Activated naive CD4-positive, alpha-beta T cell treated with anti-CD3 and anti-CD28 coated beads for 36 hours (primary cell): ENCODE measurements at regions of chr17 and their contacts with region 1.

Region 1: GRCh38 chr17:55421179-55421934 is at the start of gene MMD:
- DNase-seq: no peak
- H3K4me3 Mint-ChIP-seq: peak within 1 kb of the TSS; percentile 89
- H3K27ac Mint-ChIP-seq: peak within 1 kb of the TSS; percentile 89
- H3K4me1 Mint-ChIP-seq: peaks cover 40% of the 10 kb centered on the region
- H3K27me3 Mint-ChIP-seq: peaks cover 24% of the 10 kb centered on the region
- total RNA-seq, gene MMD: 26.2 to 27.7 TPM

Region 2: DNA sequence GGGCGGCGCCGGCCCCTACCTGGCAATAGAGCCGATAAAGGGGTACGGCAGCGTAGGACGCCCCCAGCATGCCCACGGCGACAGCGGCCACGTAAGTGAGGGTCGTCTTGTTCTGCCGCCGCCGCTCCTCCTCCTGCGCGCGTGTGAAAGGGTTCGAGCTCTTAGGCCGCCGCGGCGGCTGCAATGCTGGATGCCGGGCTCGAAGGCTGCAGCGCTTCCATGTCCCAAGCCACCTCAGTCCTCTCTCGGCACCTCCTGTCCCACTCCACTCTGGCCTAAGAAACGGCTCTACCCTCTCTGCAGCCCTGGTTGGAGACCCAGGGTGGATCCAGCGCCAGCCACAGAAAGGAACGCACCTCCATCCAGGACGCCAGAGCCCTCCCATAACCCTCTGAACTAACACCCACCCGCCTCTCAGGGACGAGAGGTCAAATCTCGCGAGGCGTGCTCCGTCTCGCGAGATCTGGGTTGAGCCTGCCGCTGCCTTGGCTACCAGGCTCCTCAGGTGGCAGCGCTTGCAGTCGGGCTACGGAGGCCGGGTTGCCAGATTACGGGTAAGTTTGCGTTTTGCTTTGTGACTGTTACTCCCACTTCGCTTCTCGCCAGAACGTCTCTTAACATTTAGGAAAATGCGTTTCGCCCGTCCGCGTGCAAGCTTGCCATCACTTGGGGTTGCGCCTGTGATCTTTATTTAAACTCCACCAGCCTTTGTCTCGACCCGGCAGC is 452.9 kb before region 1 on chr17 and contains the starts of genes COX11 and STXBP4:
- CTCF ChIA-PET with region 1: no interaction called
- intact Hi-C with region 1: loop called (anchors 1 kb)
- DNase-seq: peak; percentile 96
- H3K4me3 Mint-ChIP-seq: no peak within 1 kb of the TSS
- H3K27ac Mint-ChIP-seq: no peak within 1 kb of the TSS
- H3K4me1 Mint-ChIP-seq: peaks cover 20% of the 10 kb centered on the region
- H3K27me3 Mint-ChIP-seq: no peaks in the 10 kb centered on the region
- total RNA-seq, gene COX11: 48.6 to 50.0 TPM
- total RNA-seq, gene STXBP4: 4.5 to 5.3 TPM

Region 3: DNA sequence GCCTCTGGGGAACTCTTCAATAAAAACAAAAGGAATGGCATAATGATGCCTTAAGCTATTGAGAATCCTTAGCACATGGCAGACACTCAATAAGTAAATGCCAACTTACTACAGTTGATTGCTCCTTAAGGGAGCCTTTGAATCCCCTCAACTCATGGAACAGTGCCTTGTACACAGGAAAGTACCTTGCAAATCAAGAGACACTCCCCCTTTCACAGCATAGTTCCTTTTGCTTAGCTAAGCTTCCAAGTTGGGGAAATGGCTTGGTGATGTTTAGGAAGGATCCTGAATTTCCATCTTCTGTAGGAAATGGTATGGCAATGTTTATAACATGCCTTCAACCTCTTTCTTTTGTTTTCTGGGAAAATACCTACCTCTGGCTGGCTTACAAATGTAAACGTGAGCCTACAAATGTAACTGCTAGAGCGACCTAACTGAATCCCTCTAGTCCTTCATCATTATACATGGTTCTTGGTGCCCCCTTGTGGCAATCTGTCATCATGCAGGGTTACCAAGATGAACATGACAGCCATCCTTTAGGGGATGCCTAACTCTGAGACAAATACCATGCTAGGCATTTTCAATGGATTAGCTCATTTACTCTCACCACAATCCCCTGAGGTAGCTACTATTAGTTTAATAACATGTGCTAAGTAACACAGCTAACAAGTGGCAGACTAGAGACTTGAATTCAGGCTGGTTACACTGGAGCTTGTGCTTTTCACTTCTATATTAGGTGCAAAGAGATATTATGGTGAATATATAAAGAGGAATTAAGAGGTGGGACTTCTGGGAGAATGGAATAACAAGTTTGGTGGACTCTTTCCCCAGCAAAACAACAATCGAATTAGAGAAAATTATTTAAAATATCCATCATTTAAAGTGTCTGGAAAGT is 64.7 kb before region 1 on chr17:
- CTCF ChIA-PET with region 1: interaction called, 6 read pairs
- intact Hi-C with region 1: loop called (anchors 5 kb)
- DNase-seq: peak; percentile 88
- H3K4me3 Mint-ChIP-seq: no peak overlapping the region
- H3K27ac Mint-ChIP-seq: no peak overlapping the region
- H3K4me1 Mint-ChIP-seq: no peaks in the 10 kb centered on the region
- H3K27me3 Mint-ChIP-seq: peaks cover 9% of the 10 kb centered on the region

Region 4: DNA sequence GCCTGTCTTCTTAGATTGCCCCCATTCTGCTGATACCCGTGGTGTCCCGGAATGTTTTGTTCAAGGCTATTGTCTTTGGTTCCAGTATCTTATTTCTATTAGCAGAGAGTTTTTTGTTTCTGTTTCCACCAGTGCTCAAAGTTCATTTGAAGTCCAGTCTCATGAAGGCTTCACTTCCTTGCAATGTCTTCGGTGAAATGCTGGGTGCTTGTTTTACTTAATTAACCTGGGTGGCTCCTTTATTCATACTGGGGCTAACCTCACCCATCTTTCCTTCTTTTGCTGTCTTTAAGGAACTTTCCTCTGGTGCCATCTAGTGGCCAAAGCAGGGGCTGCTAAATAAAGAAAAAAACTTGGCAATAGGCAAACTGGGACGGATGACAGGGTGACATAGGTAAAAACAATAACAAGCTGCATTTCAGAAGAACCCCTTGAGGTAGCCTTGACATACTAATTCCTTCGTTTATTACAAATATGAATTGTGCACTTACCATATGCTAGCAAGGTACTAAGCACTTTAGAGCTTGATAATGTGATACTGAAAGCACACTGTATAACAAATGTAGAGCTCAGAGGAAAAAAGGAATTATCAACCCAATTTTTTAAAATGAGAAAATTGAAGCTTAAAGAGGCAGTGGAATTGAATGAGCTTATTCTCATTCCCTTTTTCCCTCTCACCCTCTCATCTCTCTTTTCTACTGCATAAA is 92.7 kb after region 1 on chr17:
- CTCF ChIA-PET with region 1: interaction called, 4 read pairs
- intact Hi-C with region 1: loop called (anchors 1 kb)
- DNase-seq: peak; percentile 85
- H3K4me3 Mint-ChIP-seq: no peak overlapping the region
- H3K27ac Mint-ChIP-seq: no peak overlapping the region
- H3K4me1 Mint-ChIP-seq: no peaks in the 10 kb centered on the region
- H3K27me3 Mint-ChIP-seq: no peaks in the 10 kb centered on the region

Region 5: DNA sequence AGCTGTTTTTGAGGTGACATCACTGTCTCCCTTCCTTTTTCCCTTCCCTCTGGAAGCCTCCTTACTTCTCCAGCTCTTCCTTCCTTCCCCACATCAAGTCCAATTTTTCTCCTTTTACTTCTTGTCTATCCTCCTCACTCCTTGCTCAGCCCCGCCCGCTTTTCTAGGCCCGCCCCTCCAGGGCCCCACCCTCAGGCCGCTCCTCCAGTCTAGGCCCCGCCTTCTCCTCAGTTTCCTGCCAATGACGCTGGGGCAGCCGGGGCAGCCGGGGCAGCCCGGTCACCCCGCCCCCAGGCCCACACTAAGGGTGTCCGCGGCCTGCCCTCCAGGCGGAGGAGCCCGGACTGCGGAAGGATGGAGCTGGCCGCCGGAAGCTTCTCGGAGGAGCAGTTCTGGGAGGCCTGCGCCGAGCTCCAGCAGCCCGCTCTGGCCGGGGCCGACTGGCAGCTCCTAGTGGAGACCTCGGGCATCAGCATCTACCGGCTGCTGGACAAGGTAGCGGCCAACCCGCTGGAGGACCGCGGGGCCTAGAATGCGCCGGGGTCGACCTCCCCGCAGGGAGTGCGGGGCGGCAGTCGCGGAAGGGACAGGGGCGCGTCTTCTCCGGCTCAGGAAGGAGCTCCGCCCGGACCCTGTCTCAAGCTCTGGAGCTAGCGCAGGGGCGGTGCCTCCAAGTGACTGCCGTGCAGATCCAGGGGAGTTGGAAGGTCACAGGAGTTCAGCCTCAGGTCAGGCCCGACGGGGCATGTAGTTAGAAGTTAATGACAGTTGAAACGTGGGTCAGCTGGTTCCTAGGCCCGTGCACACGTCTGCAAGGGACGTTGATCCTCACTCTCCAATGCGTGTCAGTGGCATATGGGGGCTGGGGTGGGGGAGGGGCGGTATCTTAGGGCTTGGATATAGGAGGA is 329.6 kb after region 1 on chr17 and contains the start of gene PCTP:
- CTCF ChIA-PET with region 1: no interaction called
- intact Hi-C with region 1: loop called (anchors 5 kb)
- DNase-seq: peak; percentile 92
- H3K4me3 Mint-ChIP-seq: peak within 1 kb of the TSS; percentile 82
- H3K27ac Mint-ChIP-seq: no peak within 1 kb of the TSS
- H3K4me1 Mint-ChIP-seq: peaks cover 12% of the 10 kb centered on the region
- H3K27me3 Mint-ChIP-seq: peaks cover 18% of the 10 kb centered on the region
- total RNA-seq, gene PCTP: 8.8 to 10.3 TPM

Region 6: DNA sequence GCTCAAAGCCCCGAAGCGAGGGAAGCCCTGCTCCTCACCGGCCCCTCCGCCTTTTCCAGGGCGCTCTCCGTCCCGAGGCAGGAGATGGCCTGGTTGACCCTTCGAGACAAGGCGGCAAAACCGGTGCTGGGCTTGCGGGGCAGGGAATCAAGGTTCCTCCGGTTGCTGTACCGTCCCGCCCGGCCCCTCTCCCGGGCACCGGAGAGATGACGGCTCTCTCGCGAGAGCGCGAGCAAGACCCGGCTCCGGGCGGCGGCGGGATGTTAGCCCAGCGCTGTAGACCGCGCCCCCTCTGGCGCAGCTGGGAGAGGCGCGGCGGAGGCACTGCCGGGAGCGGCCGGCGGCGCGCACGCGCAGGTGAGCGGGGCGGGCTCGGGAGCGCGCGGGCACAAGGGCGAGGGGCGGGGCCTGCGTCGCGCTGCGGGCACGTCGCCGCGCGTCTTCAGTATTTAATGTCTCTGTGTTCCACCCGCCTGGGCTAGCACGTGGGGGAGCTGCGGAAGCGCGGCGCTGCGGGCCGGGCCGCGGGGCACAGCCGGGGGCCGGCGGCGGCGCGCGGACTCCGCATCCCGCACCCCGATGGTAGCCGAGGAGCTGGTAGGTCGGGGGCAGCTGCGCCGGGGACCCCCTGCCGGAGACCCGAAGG is 1663.6 kb after region 1 on chr17 and contains the start of gene AKAP1:
- CTCF ChIA-PET with region 1: no interaction called
- intact Hi-C with region 1: loop called (anchors 2 kb)
- DNase-seq: peak; percentile 95
- H3K4me3 Mint-ChIP-seq: peak within 1 kb of the TSS; percentile 83
- H3K27ac Mint-ChIP-seq: peak within 1 kb of the TSS; percentile 81
- H3K4me1 Mint-ChIP-seq: peaks cover 43% of the 10 kb centered on the region
- H3K27me3 Mint-ChIP-seq: no peaks in the 10 kb centered on the region
- total RNA-seq, gene AKAP1: 17.6 to 23.1 TPM